HEK293 (cell line): ENCODE measurements at regions of chr14 and their contacts with region 1.

Region 1: GRCh38 chr14:92951912-92952471 is 29.0 kb downstream of the CHGA start:
- H3K4me3 ChIP-seq: no peak overlapping the region
- H3K27ac ChIP-seq: no peak overlapping the region
- H3K4me1 ChIP-seq: no peaks in the 10 kb centered on the region
- CTCF ChIP-seq: peak; percentile 92

Region 2: GRCh38 chr14:92964124-92965109 is 12.4 kb after region 1 on chr14:
- CTCF ChIA-PET with region 1: interaction called, 14 read pairs
- POLR2A ChIA-PET with region 1: no interaction called
- H3K4me3 ChIP-seq: no peak overlapping the region
- H3K27ac ChIP-seq: no peak overlapping the region
- H3K4me1 ChIP-seq: no peaks in the 10 kb centered on the region
- CTCF ChIP-seq: no peak

Region 3: GRCh38 chr14:93132470-93133065 is 180.6 kb after region 1 on chr14:
- CTCF ChIA-PET with region 1: interaction called, 19 read pairs
- POLR2A ChIA-PET with region 1: no interaction called
- H3K4me3 ChIP-seq: no peak overlapping the region
- H3K27ac ChIP-seq: no peak overlapping the region
- H3K4me1 ChIP-seq: no peaks in the 10 kb centered on the region
- CTCF ChIP-seq: peak; percentile 16; the same call in 1 of the 2 replicates